HCT116 (cell line): ENCODE measurements at regions of chr6 and their contacts with region 1.

Region 1: GRCh38 chr6:27146706-27147505 is 100.6 kb upstream of the PRSS16 start:
- DNase-seq: peak; percentile 99
- ATAC-seq: peak; percentile 71
- H3K4me3 ChIP-seq: peak overlapping the region; percentile 69 to 70
- H3K27ac ChIP-seq: peak overlapping the region; percentile 97
- H3K4me1 ChIP-seq: peaks cover 26 to 55% of the 10 kb centered on the region in 2 experiments
- H3K27me3 ChIP-seq: no peaks in the 10 kb centered on the region
- CTCF ChIP-seq: no peak
- POLR2A ChIP-seq: peak; percentile 93
- RAD21 ChIP-seq: no peak

Region 2: GRCh38 chr6:27040244-27040981 is 106.5 kb before region 1 on chr6:
- CTCF ChIA-PET with region 1: no interaction called
- POLR2A ChIA-PET with region 1: no interaction called
- RAD21 ChIA-PET with region 1: no interaction called
- intact Hi-C with region 1: no loop called
- DNase-seq: no peak
- ATAC-seq: no peak
- H3K4me3 ChIP-seq: no peak overlapping the region
- H3K27ac ChIP-seq: no peak overlapping the region
- H3K4me1 ChIP-seq: no peaks in the 10 kb centered on the region
- H3K27me3 ChIP-seq: no peaks in the 10 kb centered on the region
- CTCF ChIP-seq: no peak
- POLR2A ChIP-seq: no peak
- RAD21 ChIP-seq: no peak

Region 3: GRCh38 chr6:27132532-27133280 is 14.2 kb before region 1 on chr6:
- CTCF ChIA-PET with region 1: interaction called, 6 read pairs
- POLR2A ChIA-PET with region 1: interaction called, 390 read pairs
- RAD21 ChIA-PET with region 1: interaction called in 1 of 2 experiments, 3 read pairs
- intact Hi-C with region 1: loop called (anchors 1 kb)
- DNase-seq: peak; percentile 100
- ATAC-seq: peak; percentile 75
- H3K4me3 ChIP-seq: peak overlapping the region; percentile 62 to 71
- H3K27ac ChIP-seq: peak overlapping the region; percentile 99
- H3K4me1 ChIP-seq: peaks cover 21 to 38% of the 10 kb centered on the region in 2 experiments
- H3K27me3 ChIP-seq: no peaks in the 10 kb centered on the region
- CTCF ChIP-seq: no peak
- POLR2A ChIP-seq: peak; percentile 98
- RAD21 ChIP-seq: no peak

Region 4: DNA sequence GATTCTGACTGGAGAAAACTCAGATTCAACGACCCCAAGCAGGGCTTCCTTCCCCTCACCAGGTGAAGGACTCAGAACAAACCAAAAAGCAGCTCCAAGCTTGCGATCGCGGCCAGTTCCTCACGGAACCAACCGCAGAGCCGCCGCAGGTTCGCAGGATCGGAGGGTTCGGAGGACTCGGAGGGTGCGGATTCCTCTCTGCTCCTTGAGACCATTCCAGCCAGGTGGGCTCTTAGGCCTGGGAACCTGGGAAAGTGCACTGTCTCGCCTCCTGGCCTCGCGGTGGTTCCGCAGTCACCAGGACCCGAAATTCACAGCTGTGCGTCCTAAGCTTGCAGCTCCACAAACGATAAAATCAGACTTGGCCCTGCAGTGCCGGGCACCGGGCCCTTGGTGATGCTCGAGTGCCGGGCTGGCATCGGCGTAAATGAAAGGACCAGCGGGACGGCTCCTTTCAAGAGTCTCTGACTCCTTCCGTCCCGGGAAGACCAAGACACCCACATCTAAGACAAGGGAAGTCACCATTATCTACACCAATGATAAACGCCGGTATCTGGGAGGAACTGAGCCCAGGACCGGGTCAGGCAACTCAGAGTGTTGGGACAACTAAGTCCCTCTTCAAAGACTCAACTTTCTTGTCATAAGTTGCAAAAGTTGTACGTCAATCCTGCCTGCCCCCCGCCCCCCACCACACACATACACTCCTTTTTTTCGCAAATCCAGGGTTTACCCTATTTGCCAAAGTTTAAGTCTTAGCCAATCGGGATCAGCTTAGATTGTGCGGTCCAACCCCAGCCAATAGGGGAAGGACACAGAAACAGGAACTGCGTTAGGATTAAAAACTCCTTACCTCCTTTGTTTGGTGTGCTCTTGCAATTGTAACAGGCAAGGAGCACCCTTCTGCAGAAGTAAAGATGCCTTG is 30.8 kb after region 1 on chr6:
- CTCF ChIA-PET with region 1: no interaction called
- POLR2A ChIA-PET with region 1: interaction called, 16 read pairs
- RAD21 ChIA-PET with region 1: no interaction called
- intact Hi-C with region 1: no loop called
- DNase-seq: peak; percentile 87
- ATAC-seq: peak; percentile 86
- H3K4me3 ChIP-seq: peak overlapping the region; percentile 57 to 65
- H3K27ac ChIP-seq: peak overlapping the region; percentile 48
- H3K4me1 ChIP-seq: peaks cover 4 to 17% of the 10 kb centered on the region in 2 experiments; a peak in 3 of 4 replicates
- H3K27me3 ChIP-seq: no peaks in the 10 kb centered on the region
- CTCF ChIP-seq: peak; percentile 22 to 64 (median 61); a peak in 5 of 6 replicates
- POLR2A ChIP-seq: no peak
- RAD21 ChIP-seq: peak; percentile 69

Region 5: DNA sequence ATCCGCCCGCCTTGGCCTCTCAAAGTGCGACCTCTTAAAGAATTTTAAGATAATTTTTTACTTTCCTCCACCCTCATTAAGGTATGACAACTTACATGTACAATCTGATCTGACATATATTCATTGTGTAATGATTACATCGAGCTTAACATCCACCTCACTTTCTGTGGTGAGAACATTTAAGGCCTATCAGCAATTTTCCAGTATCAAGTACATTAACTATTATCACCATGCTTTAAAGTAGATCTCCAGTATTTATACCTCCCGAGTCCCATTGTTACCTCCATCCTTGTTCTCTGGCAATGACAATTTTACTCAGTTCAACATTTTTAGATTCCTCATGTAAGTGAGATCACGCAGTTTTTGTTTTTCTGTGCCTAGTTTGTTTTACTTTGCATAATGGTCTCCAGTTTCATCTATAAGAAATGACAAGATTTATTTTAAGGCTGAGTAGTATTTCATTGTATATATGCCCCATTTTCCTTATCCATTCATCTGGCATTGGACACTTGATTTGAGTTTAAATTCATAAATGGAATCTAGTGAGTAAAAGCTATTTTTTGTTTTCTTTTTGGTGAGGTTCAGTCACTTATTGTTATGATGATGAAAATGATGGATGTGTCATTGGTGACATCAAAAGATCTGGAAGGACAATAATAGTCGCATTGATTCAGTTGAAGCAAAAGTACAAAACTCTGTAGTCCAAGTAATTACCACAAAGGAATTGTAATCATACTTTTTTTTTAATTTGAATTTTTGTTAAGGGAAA is 678.3 kb after region 1 on chr6:
- CTCF ChIA-PET with region 1: no interaction called
- POLR2A ChIA-PET with region 1: interaction called, 11 read pairs
- RAD21 ChIA-PET with region 1: no interaction called
- intact Hi-C with region 1: no loop called
- DNase-seq: no peak
- ATAC-seq: no peak
- H3K4me3 ChIP-seq: peak overlapping the region; percentile 50 to 71
- H3K27ac ChIP-seq: peak overlapping the region; percentile 76
- H3K4me1 ChIP-seq: peaks cover 5 to 39% of the 10 kb centered on the region in 2 experiments; a peak in 3 of 4 replicates
- H3K27me3 ChIP-seq: no peaks in the 10 kb centered on the region
- CTCF ChIP-seq: no peak
- POLR2A ChIP-seq: no peak
- RAD21 ChIP-seq: no peak